Adrenal gland (tissue), 19 donors: ENCODE measurements at regions of chr2 and their contacts with region 1.

Region 1: GRCh38 chr2:206783718-206784117 is 18.3 kb downstream of the FASTKD2 start:
- DNase-seq: no peak
- H3K4me3 ChIP-seq: no peak overlapping the region
- H3K27ac ChIP-seq: no peak overlapping the region
- H3K4me1 ChIP-seq: peaks cover 0 to 4% of the 10 kb centered on the region in 2 donors
- H3K27me3 ChIP-seq: no peaks in the 10 kb centered on the region
- CTCF ChIP-seq: peak in 2 of 6 experiments; percentile 9 to 27
- POLR2A ChIP-seq: no peak

Region 2: DNA sequence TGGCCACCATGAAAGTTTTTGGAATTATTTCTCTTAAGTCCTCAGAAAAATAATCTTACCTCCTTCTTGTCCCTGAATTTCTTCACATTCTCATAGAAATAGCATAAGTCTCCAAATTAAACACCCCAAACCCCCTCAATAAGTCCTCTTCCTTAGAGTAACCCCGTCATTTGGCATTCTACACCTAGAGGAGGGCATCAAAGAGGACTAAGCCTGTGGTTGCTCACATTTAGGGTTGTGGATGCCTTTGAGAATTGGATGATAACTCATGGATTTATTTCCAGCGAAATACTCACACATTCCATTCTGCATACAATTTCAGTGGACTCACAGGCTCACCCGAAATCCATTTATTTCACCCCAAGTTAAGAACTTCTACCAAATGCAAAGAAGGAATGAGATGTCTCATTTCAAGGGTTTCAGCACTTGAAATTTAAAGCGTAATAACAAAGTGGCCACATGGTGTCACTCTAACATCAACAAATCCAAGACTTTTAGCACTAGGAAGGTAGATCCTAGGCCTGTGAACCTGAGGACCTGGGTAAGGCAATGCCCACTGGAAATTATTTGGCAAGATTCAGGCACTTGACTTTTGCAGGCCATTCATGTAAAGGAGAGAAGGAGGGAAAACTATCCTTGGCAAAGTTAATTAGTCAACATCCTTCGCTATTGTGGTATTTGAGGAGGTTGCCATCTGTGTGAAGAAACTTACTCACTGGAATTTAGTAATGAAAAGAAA is 90.2 kb before region 1 on chr2:
- intact Hi-C with region 1: loop called in 1 of 2 experiments (anchors 5 kb)
- DNase-seq: peak in 5 of 7 donors; percentile 20 to 41 (median 31)
- H3K4me3 ChIP-seq: no peak overlapping the region
- H3K27ac ChIP-seq: no peak overlapping the region
- H3K4me1 ChIP-seq: no peaks in the 10 kb centered on the region
- H3K27me3 ChIP-seq: no peaks in the 10 kb centered on the region
- CTCF ChIP-seq: peak; percentile 51 to 74 (median 66)
- POLR2A ChIP-seq: no peak